HEK293T (cell line): ENCODE measurements at regions of chr18 and their contacts with region 1.

Region 1: GRCh38 chr18:76398896-76399612 is 96.0 kb downstream of the ZNF516 start:
- DNase-seq: peak; percentile 78

Region 2: DNA sequence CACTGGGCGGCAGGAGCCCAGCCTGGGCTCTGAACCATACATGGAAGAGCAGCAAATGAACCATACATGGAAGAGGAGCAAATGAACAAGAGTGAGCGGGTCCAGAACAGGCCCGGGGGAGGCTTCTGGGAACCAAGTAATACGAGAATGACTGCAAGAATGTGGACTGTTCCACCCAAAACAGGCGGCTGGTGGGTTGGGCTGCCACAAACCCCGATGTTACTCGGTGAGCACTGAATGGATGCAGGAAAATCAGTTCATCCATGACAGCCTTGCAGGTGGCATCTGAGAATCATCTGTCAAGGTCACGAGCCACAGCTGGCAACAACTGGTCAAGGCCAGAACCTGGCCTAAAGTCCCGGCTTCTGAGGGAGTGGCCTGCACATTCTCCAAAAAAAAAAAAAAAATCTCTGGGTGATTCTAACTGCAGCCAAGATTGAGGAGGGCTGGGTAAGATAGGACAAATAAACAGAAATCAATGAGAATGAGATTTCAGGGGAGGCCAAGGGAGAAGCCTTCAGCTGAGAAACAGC is 10.1 kb before region 1 on chr18:
- CTCF ChIA-PET with region 1: no interaction called
- POLR2A ChIA-PET with region 1: no interaction called
- DNase-seq: no peak

Region 3: DNA sequence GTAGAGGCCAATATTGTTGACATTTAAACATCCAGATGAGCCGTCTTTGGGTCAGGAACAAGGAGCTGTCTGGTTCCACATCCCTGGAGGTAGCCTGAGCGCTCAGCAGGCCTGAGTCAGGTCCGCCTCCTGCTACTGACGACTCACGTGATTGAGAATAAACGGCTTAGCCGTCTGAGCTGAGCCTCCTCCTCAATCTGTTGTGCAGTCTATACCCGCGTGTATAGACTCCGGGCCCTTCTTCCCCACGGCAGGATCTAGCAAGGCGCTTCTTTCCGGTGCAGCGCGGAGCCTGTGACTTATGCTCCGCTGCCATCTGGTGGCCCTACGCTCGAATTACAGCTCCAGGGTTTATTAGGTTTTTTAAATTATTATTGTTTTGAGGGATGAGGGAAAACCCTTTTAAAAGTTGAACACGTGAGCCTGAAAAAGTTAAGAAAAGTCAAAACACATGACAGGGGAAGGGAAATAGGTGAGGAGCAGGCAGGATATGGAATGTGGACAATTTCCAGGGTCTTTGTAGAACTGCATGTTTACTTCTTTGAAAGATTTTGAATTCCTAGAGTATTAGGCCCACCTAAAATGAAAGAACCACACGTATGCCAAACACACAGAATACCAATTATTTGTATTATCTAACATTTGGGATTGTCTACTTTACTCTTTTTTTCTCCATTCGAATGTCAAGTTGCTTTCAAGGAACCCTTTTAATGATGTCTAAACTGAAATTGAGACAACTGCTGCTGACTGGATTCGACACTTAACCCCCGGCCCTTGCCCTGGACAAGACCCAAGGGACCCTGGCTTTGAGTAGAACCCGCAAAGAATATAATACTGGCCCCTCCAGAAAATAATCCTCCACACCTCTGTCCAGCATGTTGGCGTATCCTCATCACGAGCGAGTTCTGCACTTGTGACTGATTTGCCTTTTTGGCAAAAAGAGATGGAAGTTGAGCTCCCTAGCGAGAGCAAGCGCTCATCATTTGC is 310.9 kb after region 1 on chr18:
- CTCF ChIA-PET with region 1: interaction called, 12 read pairs
- POLR2A ChIA-PET with region 1: no interaction called
- DNase-seq: peak; percentile 59